ENCODE measurements at regions of chr15 and their contacts with region 1.

Region 1: GRCh38 chr15:60695713-60696522 is 217.0 kb upstream of the ICE2 start:
- DNase-seq: peak; percentile 35
- H3K4me3 Mint-ChIP-seq: peak overlapping the region; percentile 22
- H3K27ac Mint-ChIP-seq: peak overlapping the region; percentile 49
- H3K4me1 Mint-ChIP-seq: peaks cover 52% of the 10 kb centered on the region
- H3K27me3 Mint-ChIP-seq: peaks cover 25% of the 10 kb centered on the region

Region 2: GRCh38 chr15:60548101-60548500 is 147.8 kb before region 1 on chr15:
- intact Hi-C with region 1: loop called (anchors 1 kb)
- DNase-seq: peak; percentile 38
- H3K4me3 Mint-ChIP-seq: peak overlapping the region; percentile 63
- H3K27ac Mint-ChIP-seq: peak overlapping the region; percentile 91
- H3K4me1 Mint-ChIP-seq: peaks cover 79% of the 10 kb centered on the region
- H3K27me3 Mint-ChIP-seq: peaks cover 2% of the 10 kb centered on the region

Region 3: DNA sequence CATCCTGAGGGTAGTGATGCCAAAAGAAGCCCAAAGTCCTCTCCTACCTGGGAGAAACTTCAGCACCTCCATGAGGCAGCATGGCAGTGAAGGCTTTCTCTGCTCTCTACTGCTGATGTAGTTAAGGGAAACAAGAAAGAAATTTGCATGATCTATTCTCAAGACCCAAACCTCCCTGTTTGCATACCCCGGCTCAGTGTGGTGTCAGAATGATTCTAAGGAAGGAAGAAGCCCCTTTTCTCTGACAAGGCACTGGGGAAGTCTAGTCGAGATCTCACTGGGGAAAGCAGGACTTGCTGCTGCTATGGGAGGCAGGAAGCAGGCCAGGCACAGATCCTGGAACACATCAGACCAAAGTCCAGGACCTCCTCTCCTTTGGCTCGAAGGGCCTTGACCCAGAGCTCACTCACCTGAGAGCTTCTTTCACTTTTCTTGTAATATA is 127.6 kb before region 1 on chr15:
- intact Hi-C with region 1: no loop called
- DNase-seq: no peak
- H3K4me3 Mint-ChIP-seq: peak overlapping the region; percentile 4
- H3K27ac Mint-ChIP-seq: peak overlapping the region; percentile 51
- H3K4me1 Mint-ChIP-seq: peaks cover 54% of the 10 kb centered on the region
- H3K27me3 Mint-ChIP-seq: peaks cover 2% of the 10 kb centered on the region

Region 4: GRCh38 chr15:60649845-60650548 is 45.9 kb before region 1 on chr15:
- intact Hi-C with region 1: loop called (anchors 1 kb)
- DNase-seq: peak; percentile 20
- H3K4me3 Mint-ChIP-seq: peak overlapping the region; percentile 50
- H3K27ac Mint-ChIP-seq: peak overlapping the region; percentile 71
- H3K4me1 Mint-ChIP-seq: peaks cover 27% of the 10 kb centered on the region
- H3K27me3 Mint-ChIP-seq: peaks cover 22% of the 10 kb centered on the region

Region 5: DNA sequence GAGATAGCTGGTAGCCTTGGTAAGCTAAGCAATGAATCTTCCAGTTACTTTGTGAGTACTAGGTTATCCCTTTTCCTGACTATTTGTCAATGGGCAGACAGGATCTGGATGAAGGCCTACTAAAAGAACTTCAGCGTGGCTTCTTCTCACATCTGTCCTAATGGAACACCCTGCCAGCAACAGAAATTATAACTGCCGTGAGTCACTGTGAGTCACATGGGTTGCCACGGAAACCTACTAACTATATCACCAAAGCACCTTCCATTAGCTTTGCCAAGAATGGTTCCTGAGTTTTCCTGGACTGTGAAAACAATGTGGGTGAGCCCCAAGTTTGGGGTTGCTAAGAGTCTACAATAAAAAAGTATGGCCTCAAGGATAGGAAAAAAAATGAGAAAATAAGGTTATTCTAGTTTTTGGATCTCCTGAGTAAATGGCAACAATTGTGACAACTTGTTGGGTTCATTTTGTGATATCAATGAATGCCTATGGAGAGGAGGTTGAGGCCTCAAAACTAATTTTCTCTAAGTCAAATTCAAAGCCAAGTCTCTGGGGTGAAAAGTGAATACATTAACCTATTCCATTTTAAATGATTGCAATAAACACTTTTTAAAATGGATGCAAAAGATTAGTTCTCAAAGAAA is 21.9 kb before region 1 on chr15:
- intact Hi-C with region 1: no loop called
- DNase-seq: no peak
- H3K4me3 Mint-ChIP-seq: no peak overlapping the region
- H3K27ac Mint-ChIP-seq: no peak overlapping the region
- H3K4me1 Mint-ChIP-seq: peaks cover 8% of the 10 kb centered on the region
- H3K27me3 Mint-ChIP-seq: peaks cover 25% of the 10 kb centered on the region

Region 6: DNA sequence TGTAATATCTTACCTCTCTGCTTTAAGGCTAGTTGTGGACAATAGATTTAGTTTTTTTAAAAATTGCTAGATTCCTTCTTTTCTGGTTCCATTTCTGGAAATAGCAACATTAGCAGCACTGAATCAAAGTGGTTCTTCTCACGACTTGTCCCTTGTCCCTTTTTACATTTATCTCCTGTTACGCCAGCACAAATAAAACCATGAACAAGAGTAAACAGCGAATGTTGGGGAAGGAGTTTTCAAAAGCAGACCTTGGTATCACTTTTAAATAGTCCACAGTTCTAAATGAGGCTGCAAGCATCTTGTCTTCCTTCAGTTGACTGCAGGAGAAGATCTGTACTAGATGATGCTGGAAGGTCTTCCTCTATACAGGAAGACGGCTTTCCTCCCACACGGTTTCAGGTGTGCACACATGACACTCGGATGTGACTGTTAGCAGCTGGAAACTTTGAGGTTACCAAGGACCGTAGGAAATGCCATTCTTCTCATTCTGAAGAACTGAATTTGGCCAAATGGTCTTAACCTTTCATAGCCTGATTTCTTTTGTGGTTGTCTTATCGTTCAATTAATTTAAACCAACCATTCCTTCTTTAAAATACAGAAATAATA is 34.0 kb after region 1 on chr15:
- intact Hi-C with region 1: loop called (anchors 2 kb)
- DNase-seq: no peak
- H3K4me3 Mint-ChIP-seq: peak overlapping the region; percentile 55
- H3K27ac Mint-ChIP-seq: peak overlapping the region; percentile 70
- H3K4me1 Mint-ChIP-seq: peaks cover 37% of the 10 kb centered on the region
- H3K27me3 Mint-ChIP-seq: peaks cover 7% of the 10 kb centered on the region

Region 7: GRCh38 chr15:60745469-60746061 is 49.6 kb after region 1 on chr15:
- intact Hi-C with region 1: no loop called
- DNase-seq: no peak
- H3K4me3 Mint-ChIP-seq: no peak overlapping the region
- H3K27ac Mint-ChIP-seq: no peak overlapping the region
- H3K4me1 Mint-ChIP-seq: peaks cover 9% of the 10 kb centered on the region
- H3K27me3 Mint-ChIP-seq: peaks cover 9% of the 10 kb centered on the region

Region 8: GRCh38 chr15:60798821-60799220 is 102.9 kb after region 1 on chr15:
- intact Hi-C with region 1: loop called (anchors 2 kb)
- DNase-seq: no peak
- H3K4me3 Mint-ChIP-seq: no peak overlapping the region
- H3K27ac Mint-ChIP-seq: no peak overlapping the region
- H3K4me1 Mint-ChIP-seq: peaks cover 39% of the 10 kb centered on the region
- H3K27me3 Mint-ChIP-seq: peaks cover 9% of the 10 kb centered on the region

Measured in activated T-helper 2 cell treated with anti-CD3 and anti-CD28 coated beads, Interferon-gamma antibody, Interleukin-2, Interleukin-4, amounts not matched to agents 10 μg/mL and 5 μg/mL and 100 μg/mL, durations not matched to agents 14 hours and 24 hours and 36 hours (primary cell).